ENCODE measurements at regions of chr3 and their contacts with region 1.

Region 1: GRCh38 chr3:179929091-179929529 is 107.6 kb downstream of the PEX5L start:
- DNase-seq: no peak
- ATAC-seq: peak; percentile 84
- H3K4me3 ChIP-seq: no peak overlapping the region
- H3K27ac ChIP-seq: no peak overlapping the region
- H3K4me1 ChIP-seq: no peaks in the 10 kb centered on the region; the same call in 1 of the 2 replicates
- H3K27me3 ChIP-seq: no peaks in the 10 kb centered on the region
- CTCF ChIP-seq: peak; percentile 70 to 79 (median 72)
- EP300 ChIP-seq: no peak
- POLR2A ChIP-seq: no peak
- RAD21 ChIP-seq: peak; percentile 92

Region 2: GRCh38 chr3:179898024-179898423 is 31.1 kb before region 1 on chr3:
- CTCF ChIA-PET with region 1: interaction called, 6 read pairs
- POLR2A ChIA-PET with region 1: no interaction called
- RAD21 ChIA-PET with region 1: interaction called, 3 read pairs
- SMC1A ChIA-PET with region 1: interaction called, 12 read pairs
- in situ Hi-C with region 1: no loop called
- intact Hi-C with region 1: no loop called
- DNase-seq: no peak
- ATAC-seq: peak; percentile 97
- H3K4me3 ChIP-seq: no peak overlapping the region
- H3K27ac ChIP-seq: no peak overlapping the region
- H3K4me1 ChIP-seq: no peaks in the 10 kb centered on the region
- H3K27me3 ChIP-seq: no peaks in the 10 kb centered on the region
- CTCF ChIP-seq: no peak
- EP300 ChIP-seq: no peak
- POLR2A ChIP-seq: no peak
- RAD21 ChIP-seq: no peak

Region 3: GRCh38 chr3:179956416-179956830 is 27.3 kb after region 1 on chr3:
- CTCF ChIA-PET with region 1: interaction called, 27 read pairs
- POLR2A ChIA-PET with region 1: interaction called, 5 read pairs
- RAD21 ChIA-PET with region 1: interaction called, 20 read pairs
- SMC1A ChIA-PET with region 1: interaction called, 38 read pairs
- in situ Hi-C with region 1: no loop called
- intact Hi-C with region 1: loop called (anchors 1 kb)
- DNase-seq: peak; percentile 96
- ATAC-seq: peak; percentile 91
- H3K4me3 ChIP-seq: peak overlapping the region; percentile 4; the same call in 1 of the 2 replicates
- H3K27ac ChIP-seq: peak overlapping the region; percentile 70
- H3K4me1 ChIP-seq: peaks cover 27% of the 10 kb centered on the region
- H3K27me3 ChIP-seq: no peaks in the 10 kb centered on the region
- CTCF ChIP-seq: no peak
- EP300 ChIP-seq: peak; percentile 89 to 98
- POLR2A ChIP-seq: no peak
- RAD21 ChIP-seq: no peak

Region 4: GRCh38 chr3:180018543-180018942 is 89.4 kb after region 1 on chr3:
- CTCF ChIA-PET with region 1: interaction called, 88 read pairs
- POLR2A ChIA-PET with region 1: no interaction called
- RAD21 ChIA-PET with region 1: interaction called, 51 read pairs
- SMC1A ChIA-PET with region 1: interaction called, 98 read pairs
- in situ Hi-C with region 1: no loop called
- intact Hi-C with region 1: loop called (anchors 2 kb)
- DNase-seq: no peak
- ATAC-seq: peak; percentile 85
- H3K4me3 ChIP-seq: no peak overlapping the region
- H3K27ac ChIP-seq: no peak overlapping the region
- H3K4me1 ChIP-seq: no peaks in the 10 kb centered on the region
- H3K27me3 ChIP-seq: no peaks in the 10 kb centered on the region
- CTCF ChIP-seq: peak; percentile 8 to 50 (median 35); a peak in 3 of 6 replicates
- EP300 ChIP-seq: no peak
- POLR2A ChIP-seq: no peak
- RAD21 ChIP-seq: peak; percentile 65

Region 5: GRCh38 chr3:180085122-180085710 is 156.1 kb after region 1 on chr3:
- CTCF ChIA-PET with region 1: no interaction called
- POLR2A ChIA-PET with region 1: no interaction called
- RAD21 ChIA-PET with region 1: interaction called, 4 read pairs
- SMC1A ChIA-PET with region 1: interaction called, 4 read pairs
- in situ Hi-C with region 1: no loop called
- intact Hi-C with region 1: loop called (anchors 1 kb)
- DNase-seq: no peak
- ATAC-seq: peak; percentile 61
- H3K4me3 ChIP-seq: no peak overlapping the region
- H3K27ac ChIP-seq: no peak overlapping the region
- H3K4me1 ChIP-seq: no peaks in the 10 kb centered on the region
- H3K27me3 ChIP-seq: no peaks in the 10 kb centered on the region
- CTCF ChIP-seq: peak in 2 of 3 experiments; percentile 13 to 29; a peak in 1 of 6 replicates
- EP300 ChIP-seq: no peak
- POLR2A ChIP-seq: no peak
- RAD21 ChIP-seq: peak; percentile 52

Region 6: GRCh38 chr3:180601688-180602666 is 672.9 kb after region 1 on chr3 and contains the start of gene TTC14:
- CTCF ChIA-PET with region 1: interaction called, 11 read pairs
- POLR2A ChIA-PET with region 1: no interaction called
- RAD21 ChIA-PET with region 1: interaction called, 13 read pairs
- SMC1A ChIA-PET with region 1: interaction called, 4 read pairs
- in situ Hi-C with region 1: loop called (anchors 5 kb)
- intact Hi-C with region 1: no loop called
- DNase-seq: peak; percentile 81
- ATAC-seq: peak; percentile 95
- H3K4me3 ChIP-seq: peak within 1 kb of the TSS; percentile 90
- H3K27ac ChIP-seq: peak within 1 kb of the TSS; percentile 67
- H3K4me1 ChIP-seq: no peaks in the 10 kb centered on the region
- H3K27me3 ChIP-seq: no peaks in the 10 kb centered on the region
- CTCF ChIP-seq: peak in 1 of 3 experiments; percentile 45; a peak in 2 of 6 replicates
- EP300 ChIP-seq: no peak
- POLR2A ChIP-seq: peak; percentile 93
- RAD21 ChIP-seq: peak; percentile 34
- polyA plus RNA-seq, gene TTC14: 14.0 to 22.4 TPM